Ovary (tissue), 10 donors: ENCODE measurements at regions of chr2 and their contacts with region 1.

Region 1: GRCh38 chr2:217707131-217707667 is 295.6 kb downstream of the TNS1 start:
- DNase-seq: peak in 4 of 5 donors; percentile 42 to 65 (median 52)
- H3K4me3 ChIP-seq: no peak overlapping the region
- H3K27ac ChIP-seq: peak overlapping the region in 1 of 2 donors; percentile 40
- H3K4me1 ChIP-seq: peaks cover 12% of the 10 kb centered on the region
- H3K27me3 ChIP-seq: no peaks in the 10 kb centered on the region
- CTCF ChIP-seq: no peak
- EP300 ChIP-seq: no peak
- POLR2A ChIP-seq: no peak

Region 2: GRCh38 chr2:217650716-217651360 is 56.4 kb before region 1 on chr2:
- intact Hi-C with region 1: loop called in 1 of 4 experiments (anchors 5 kb)
- DNase-seq: peak in 2 of 5 donors; percentile 21 to 28
- H3K4me3 ChIP-seq: no peak overlapping the region
- H3K27ac ChIP-seq: no peak overlapping the region
- H3K4me1 ChIP-seq: peaks cover 7% of the 10 kb centered on the region
- H3K27me3 ChIP-seq: no peaks in the 10 kb centered on the region
- CTCF ChIP-seq: peak in 2 of 3 donors; percentile 26 to 40
- EP300 ChIP-seq: no peak
- POLR2A ChIP-seq: no peak